ENCODE measurements at regions of chr6 and their contacts with region 1.

Region 1: DNA sequence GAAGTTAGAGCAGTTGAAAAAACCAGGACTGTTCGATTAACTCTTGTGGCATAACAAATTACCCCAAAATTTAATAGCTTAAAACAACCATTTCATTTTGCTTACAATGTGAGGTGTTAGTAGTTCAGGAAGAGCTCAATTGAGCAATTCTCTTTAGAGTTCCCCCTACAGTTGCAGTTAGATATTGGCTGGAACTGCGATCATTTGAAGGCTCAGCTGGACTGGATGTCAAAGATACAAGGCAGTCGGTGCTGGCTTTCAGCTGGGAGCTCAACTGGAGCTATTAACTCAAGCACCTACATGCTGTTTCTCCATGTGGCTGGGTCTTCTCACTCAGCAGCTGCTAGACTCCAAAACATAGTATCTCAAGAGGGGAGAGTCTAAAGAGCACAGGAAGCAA is 96.0 kb upstream of the LOC128125822 start:
- DNase-seq: no peak
- ATAC-seq: peak; percentile 74 to 84 (median 79)
- H3K4me3 ChIP-seq: peak overlapping the region; percentile 48
- H3K27ac ChIP-seq: peak overlapping the region; percentile 90
- H3K4me1 ChIP-seq: peaks cover 14% of the 10 kb centered on the region
- H3K27me3 ChIP-seq: no peaks in the 10 kb centered on the region
- CTCF ChIP-seq: peak; percentile 22

Region 2: GRCh38 chr6:63426844-63427243 is 49.5 kb before region 1 on chr6:
- intact Hi-C with region 1: loop called in 1 of 2 experiments (anchors 2 kb)
- DNase-seq: no peak
- ATAC-seq: no peak
- H3K4me3 ChIP-seq: no peak overlapping the region
- H3K27ac ChIP-seq: no peak overlapping the region
- H3K4me1 ChIP-seq: peaks cover 11% of the 10 kb centered on the region
- H3K27me3 ChIP-seq: no peaks in the 10 kb centered on the region
- CTCF ChIP-seq: no peak

Region 3: DNA sequence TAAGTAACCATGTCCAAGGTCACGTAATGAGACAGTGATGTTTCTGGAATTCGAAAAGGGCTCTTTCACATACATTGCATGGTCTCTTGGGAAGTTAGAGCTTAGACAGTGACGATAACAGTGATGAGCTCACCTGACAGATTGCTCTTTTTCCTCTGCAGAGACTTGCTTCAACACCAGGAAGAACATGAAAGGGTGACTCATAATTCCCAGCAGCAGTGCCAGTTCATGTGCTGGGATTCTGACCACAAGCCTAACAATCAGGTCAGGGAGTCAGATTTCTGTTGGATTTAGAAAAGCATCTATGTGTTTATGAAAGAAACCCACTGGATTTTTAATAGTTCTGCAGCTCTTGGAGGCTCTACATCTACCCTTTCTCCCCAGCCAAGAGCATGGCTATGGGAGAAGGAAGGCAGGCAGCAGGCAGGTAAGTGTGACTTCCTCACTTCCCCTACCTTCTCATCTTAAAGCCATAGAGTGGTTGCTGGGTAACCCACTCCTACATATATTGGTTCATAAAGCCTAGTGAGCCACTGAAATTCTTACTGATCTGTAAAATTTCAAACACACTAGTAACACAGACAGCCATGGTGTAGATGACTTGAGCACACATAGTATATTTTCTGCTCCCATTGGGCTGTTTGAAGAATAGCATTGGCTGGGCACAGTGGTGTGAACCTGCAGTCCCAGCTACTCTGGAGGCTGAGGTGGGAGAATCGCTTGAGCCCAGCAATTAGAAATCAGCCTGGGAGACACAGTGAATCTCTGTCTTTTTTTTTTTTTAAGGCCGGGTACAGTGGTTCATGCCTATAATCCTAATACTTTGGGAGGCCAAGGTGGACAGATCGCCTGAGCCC is 51.6 kb after region 1 on chr6:
- intact Hi-C with region 1: loop called in 1 of 2 experiments (anchors 5 kb)
- DNase-seq: peak; percentile 25 to 62
- ATAC-seq: peak; percentile 96 to 99 (median 97)
- H3K4me3 ChIP-seq: peak overlapping the region; percentile 35
- H3K27ac ChIP-seq: peak overlapping the region; percentile 80
- H3K4me1 ChIP-seq: peaks cover 10% of the 10 kb centered on the region
- H3K27me3 ChIP-seq: no peaks in the 10 kb centered on the region
- CTCF ChIP-seq: no peak

Region 4: DNA sequence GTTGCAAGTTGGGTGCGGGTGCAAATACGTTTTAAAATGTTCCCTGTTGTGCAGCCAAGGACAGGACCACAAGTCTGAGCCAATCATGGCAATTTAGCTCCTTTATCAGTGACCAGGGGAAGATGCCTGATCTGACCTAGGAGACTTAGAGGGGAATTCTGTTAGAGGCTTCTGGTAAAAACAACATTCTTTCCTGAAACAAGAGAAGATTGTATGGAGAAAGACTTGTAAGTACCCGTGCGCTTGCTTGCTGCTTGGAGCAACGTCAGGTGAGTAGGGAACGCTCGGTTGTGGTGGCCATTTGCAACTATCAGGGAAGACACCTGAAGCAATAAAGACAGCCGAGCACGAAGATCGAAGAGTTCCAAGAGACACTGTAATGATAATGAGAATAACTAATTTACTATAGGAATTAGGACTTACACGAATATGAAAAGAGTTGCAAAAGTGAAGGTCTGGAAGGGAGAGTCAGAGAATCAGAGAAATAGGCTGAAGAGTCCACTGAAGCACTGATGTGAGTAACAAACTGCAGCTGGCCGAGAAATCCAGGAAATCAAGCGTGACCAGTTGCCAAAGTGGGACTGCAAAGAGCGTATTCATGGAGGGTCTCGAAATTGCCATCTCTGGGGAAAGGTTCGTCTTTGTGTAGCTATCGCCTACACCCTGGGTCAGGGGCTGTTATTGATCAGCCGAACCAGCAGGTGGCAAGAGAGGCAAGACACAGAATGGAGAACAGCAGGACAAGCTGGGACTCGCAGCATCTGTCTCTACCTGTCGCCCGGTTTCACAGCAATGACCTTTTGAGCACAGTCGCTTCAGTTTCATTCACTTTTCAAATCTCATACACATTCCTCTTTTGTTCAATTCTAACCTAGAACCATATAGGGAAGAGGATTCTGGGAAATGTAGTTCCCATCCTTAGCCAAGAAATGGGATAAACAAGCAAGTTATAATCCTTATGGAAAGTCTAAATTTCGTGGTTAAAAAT is 122.0 kb after region 1 on chr6:
- intact Hi-C with region 1: no loop called
- DNase-seq: peak; percentile 57 to 76
- ATAC-seq: peak; percentile 91 to 99 (median 94)
- H3K4me3 ChIP-seq: peak overlapping the region; percentile 75
- H3K27ac ChIP-seq: no peak overlapping the region
- H3K4me1 ChIP-seq: peaks cover 6% of the 10 kb centered on the region
- H3K27me3 ChIP-seq: no peaks in the 10 kb centered on the region
- CTCF ChIP-seq: peak; percentile 89

Region 5: DNA sequence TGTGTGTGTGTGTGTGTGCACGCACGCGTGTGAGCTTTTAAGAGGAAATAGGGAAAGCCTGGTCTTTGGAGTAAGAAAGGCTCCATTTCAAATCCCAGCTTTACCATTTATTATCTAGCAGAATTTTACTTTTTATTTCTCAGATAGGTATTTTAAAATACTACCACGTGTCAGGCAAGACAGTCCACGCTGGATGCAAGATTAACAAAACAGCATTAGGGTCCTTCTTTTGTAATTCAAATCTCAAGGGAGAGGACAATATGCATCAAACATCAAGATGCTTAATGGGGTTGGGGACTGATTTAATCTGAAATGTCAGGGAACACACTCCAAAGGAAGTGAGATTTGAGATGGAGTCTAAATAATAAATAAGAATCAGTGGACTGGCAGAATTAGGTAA is 928.1 kb after region 1 on chr6:
- intact Hi-C with region 1: no loop called
- DNase-seq: no peak
- ATAC-seq: no peak
- H3K4me3 ChIP-seq: no peak overlapping the region
- H3K27ac ChIP-seq: no peak overlapping the region
- H3K4me1 ChIP-seq: no peaks in the 10 kb centered on the region
- H3K27me3 ChIP-seq: no peaks in the 10 kb centered on the region
- CTCF ChIP-seq: no peak